Right cardiac atrium (tissue), 5 donors: ENCODE measurements at regions of chr6 and their contacts with region 1.

Region 1: GRCh38 chr6:89745716-89746115 is 73.9 kb downstream of the MDN1 start:
- DNase-seq: no peak
- ATAC-seq: no peak
- H3K4me3 ChIP-seq: no peak overlapping the region
- H3K27ac ChIP-seq: no peak overlapping the region
- H3K4me1 ChIP-seq: no peaks in the 10 kb centered on the region
- H3K27me3 ChIP-seq: no peaks in the 10 kb centered on the region

Region 2: DNA sequence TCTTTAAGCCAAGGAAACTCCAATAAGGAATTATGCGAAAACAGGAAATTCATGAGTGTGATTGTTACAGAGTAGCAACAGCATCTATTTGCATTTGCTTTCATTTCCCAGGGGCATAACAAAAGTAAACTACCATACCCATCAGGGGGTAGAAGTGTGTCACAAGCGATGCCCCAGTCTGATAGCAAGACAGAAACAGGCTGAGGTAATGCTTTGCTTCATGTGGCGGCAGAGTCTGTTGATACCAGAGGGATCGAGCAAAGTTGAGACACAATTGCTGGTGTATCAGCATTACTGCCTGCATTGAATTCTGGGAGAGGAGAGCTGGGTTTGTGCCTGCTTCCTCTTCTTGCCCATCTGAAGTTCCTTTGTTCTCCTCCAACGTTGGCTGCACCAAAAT is 56.0 kb before region 1 on chr6:
- intact Hi-C with region 1: loop called in 1 of 4 experiments (anchors 10 kb)
- DNase-seq: no peak
- ATAC-seq: peak; percentile 40 to 57
- H3K4me3 ChIP-seq: no peak overlapping the region
- H3K27ac ChIP-seq: peak overlapping the region; percentile 14
- H3K4me1 ChIP-seq: peaks cover 2% of the 10 kb centered on the region
- H3K27me3 ChIP-seq: no peaks in the 10 kb centered on the region